Activated T-helper 1 cell treated with anti-CD3 and anti-CD28 coated beads, Interleukin-12 subunit alpha, Interleukin-12 subunit beta, Interleukin-2, Interleukin-4 antibody, amounts not matched to agents 30 ng/mL and 10 ng/mL and 1 ng/mL, durations not matched to agents 14 hours and 24 hours and 36 hours (primary cell): ENCODE measurements at regions of chr3 and their contacts with region 1.

Region 1: DNA sequence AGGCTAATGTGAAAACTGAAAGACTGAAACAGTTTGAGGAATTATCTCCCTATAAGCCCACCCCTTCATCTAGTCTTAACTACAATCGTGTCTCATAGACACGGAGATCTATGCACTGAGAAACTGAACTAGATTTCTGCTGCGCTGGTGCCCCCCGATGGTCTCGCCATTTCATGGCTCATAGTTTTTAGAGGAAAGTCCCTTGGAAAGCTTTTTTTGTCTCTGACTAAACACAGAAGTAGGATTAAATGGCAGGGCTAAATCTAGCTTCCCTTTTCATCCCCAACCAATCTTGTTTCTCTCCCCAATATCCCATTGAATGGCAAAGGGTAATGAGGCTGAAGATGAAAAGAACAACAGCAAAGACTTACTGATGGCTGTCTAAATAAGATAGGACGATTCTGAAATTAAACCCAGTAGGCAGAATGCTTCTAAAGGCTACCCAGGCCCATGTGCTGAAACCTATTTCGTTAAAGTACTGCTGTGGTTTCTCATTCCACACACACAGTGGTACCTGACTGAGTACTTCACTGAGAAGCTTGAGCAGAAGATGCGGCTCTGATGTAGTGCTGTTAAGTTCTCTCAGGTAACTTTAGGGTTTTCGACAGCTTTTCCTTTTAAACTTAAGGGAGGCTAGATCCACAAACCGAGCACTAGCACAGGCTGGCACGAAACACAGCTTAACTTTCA is 142.7 kb downstream of the GADL1 start:
- DNase-seq: peak; percentile 26
- H3K4me3 Mint-ChIP-seq: no peak overlapping the region
- H3K27ac Mint-ChIP-seq: no peak overlapping the region
- H3K4me1 Mint-ChIP-seq: peaks cover 35% of the 10 kb centered on the region
- H3K27me3 Mint-ChIP-seq: no peaks in the 10 kb centered on the region

Region 2: GRCh38 chr3:30012941-30013543 is 738.7 kb before region 1 on chr3:
- intact Hi-C with region 1: loop called (anchors 1 kb)
- DNase-seq: peak; percentile 3
- H3K4me3 Mint-ChIP-seq: no peak overlapping the region
- H3K27ac Mint-ChIP-seq: no peak overlapping the region
- H3K4me1 Mint-ChIP-seq: no peaks in the 10 kb centered on the region
- H3K27me3 Mint-ChIP-seq: peaks cover 5% of the 10 kb centered on the region

Region 3: GRCh38 chr3:30042274-30042859 is 709.4 kb before region 1 on chr3:
- intact Hi-C with region 1: loop called (anchors 1 kb)
- DNase-seq: peak; percentile 20
- H3K4me3 Mint-ChIP-seq: no peak overlapping the region
- H3K27ac Mint-ChIP-seq: no peak overlapping the region
- H3K4me1 Mint-ChIP-seq: no peaks in the 10 kb centered on the region
- H3K27me3 Mint-ChIP-seq: peaks cover 13% of the 10 kb centered on the region

Region 4: GRCh38 chr3:30112902-30113484 is 638.8 kb before region 1 on chr3:
- intact Hi-C with region 1: loop called (anchors 1 kb)
- DNase-seq: no peak
- H3K4me3 Mint-ChIP-seq: no peak overlapping the region
- H3K27ac Mint-ChIP-seq: no peak overlapping the region
- H3K4me1 Mint-ChIP-seq: peaks cover 4% of the 10 kb centered on the region
- H3K27me3 Mint-ChIP-seq: peaks cover 12% of the 10 kb centered on the region

Region 5: GRCh38 chr3:30353711-30354467 is 397.9 kb before region 1 on chr3:
- intact Hi-C with region 1: loop called (anchors 5 kb)
- DNase-seq: peak; percentile 70
- H3K4me3 Mint-ChIP-seq: peak overlapping the region; percentile 27
- H3K27ac Mint-ChIP-seq: peak overlapping the region; percentile 70
- H3K4me1 Mint-ChIP-seq: peaks cover 85% of the 10 kb centered on the region
- H3K27me3 Mint-ChIP-seq: peaks cover 14% of the 10 kb centered on the region

Region 6: GRCh38 chr3:30982416-30983075 is 230.8 kb after region 1 on chr3:
- intact Hi-C with region 1: no loop called
- DNase-seq: no peak
- H3K4me3 Mint-ChIP-seq: no peak overlapping the region
- H3K27ac Mint-ChIP-seq: no peak overlapping the region
- H3K4me1 Mint-ChIP-seq: peaks cover 6% of the 10 kb centered on the region
- H3K27me3 Mint-ChIP-seq: peaks cover 8% of the 10 kb centered on the region